ENCODE measurements at regions of chr14 and their contacts with region 1.

Region 1: DNA sequence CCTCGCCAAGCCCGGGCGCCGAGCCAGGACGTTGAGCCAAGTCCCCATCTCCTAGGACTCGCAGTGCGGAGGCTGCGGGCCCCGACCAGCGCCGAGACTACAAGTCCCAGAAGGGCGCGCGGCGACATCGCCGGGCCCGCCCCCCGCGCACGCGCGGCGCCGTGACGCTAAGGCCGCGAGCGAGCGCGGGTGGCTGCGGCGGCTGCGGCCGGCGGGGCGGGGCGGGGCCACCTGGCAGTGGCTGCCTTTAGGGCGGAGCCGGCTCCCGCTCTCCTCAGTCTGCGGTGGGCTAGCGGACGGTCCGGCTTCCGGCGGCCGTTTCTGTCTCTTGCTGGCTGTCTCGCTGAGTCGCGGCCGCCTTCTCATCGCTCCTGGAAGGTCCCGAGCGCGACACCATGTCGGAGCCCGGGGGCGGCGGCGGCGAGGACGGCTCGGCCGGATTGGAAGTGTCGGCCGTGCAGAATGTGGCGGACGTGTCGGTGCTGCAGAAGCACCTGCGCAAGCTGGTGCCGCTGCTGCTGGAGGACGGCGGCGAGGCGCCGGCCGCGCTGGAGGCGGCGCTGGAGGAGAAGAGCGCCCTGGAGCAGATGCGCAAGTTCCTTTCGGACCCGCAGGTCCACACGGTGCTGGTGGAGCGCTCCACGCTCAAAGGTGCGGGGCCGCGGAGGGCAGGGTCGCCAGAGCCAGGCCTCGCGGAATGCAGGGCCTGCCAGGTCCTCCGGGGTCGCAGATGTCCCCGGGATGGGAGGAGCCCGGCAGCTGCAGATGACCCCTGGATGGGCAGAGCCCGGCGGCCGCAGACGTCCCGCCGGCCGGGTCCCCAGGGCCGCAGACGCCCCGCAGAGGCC is at the start of gene DYNC1H1:
- DNase-seq: peak; percentile 94
- ATAC-seq: peak; percentile 90
- H3K4me3 ChIP-seq: peak within 1 kb of the TSS; percentile 46 to 97 (median 93)
- H3K4me3 Mint-ChIP-seq: peak within 1 kb of the TSS; percentile 96
- H3K27ac ChIP-seq: peak within 1 kb of the TSS; percentile 72 to 82
- H3K27ac Mint-ChIP-seq: peak within 1 kb of the TSS; percentile 94
- H3K4me1 ChIP-seq: peaks cover 12 to 22% of the 10 kb centered on the region in 2 donors
- H3K4me1 Mint-ChIP-seq: peaks cover 42% of the 10 kb centered on the region
- H3K27me3 ChIP-seq: no peaks in the 10 kb centered on the region
- H3K27me3 Mint-ChIP-seq: no peaks in the 10 kb centered on the region
- CTCF ChIP-seq: no peak
- total RNA-seq, gene DYNC1H1: 257 TPM in 2 replicates

Region 2: DNA sequence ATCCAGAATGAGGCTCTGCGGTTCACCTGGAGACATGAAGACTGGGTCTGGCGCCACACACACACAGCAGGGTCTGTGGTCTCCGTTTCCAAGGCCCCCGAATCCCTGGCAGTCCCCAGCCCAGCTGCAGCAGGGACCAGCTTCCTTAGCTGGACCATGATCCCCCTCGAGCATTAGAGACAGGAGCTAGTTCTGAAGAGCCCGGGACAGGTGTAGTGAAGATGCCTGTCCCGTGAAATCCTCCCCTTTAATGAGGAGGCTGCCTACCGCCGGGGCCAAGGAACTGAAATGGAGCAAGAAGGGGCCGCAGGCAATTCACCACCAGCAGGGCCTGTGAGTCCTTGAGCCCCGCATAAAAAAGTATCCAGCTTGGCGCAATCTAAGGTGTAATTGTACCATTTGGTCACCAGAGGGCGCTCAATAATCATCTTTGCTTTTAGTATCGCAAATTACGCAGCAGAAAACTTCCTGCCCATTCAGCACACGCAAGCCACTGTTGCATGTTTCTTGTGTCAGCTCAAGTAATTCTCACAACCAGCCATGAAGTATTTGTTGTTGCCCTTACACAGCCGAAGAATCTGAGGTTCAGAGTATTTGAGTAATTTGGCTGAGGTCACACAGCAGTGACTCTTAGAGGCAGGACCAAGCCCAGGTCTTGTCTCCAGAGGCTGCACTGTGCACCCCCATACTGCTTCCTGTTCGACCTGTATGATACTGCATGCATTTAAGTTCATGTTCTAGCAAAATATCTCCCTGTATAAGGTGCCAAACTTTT is 257.3 kb before region 1 on chr14:
- CTCF ChIA-PET with region 1: interaction called, 10 read pairs
- POLR2A ChIA-PET with region 1: interaction called, 3 read pairs
- intact Hi-C with region 1: loop called (anchors 1 kb)
- DNase-seq: peak; percentile 89
- ATAC-seq: peak; percentile 71
- H3K4me3 ChIP-seq: peak overlapping the region in 1 of 5 experiments; percentile 5
- H3K4me3 Mint-ChIP-seq: peak overlapping the region; percentile 65
- H3K27ac ChIP-seq: no peak overlapping the region
- H3K27ac Mint-ChIP-seq: peak overlapping the region; percentile 53
- H3K4me1 ChIP-seq: peaks cover 19 to 23% of the 10 kb centered on the region in 2 donors
- H3K4me1 Mint-ChIP-seq: peaks cover 22% of the 10 kb centered on the region
- H3K27me3 ChIP-seq: peaks cover 0 to 7% (median 1%) of the 10 kb centered on the region in 4 experiments
- H3K27me3 Mint-ChIP-seq: peaks cover 18% of the 10 kb centered on the region
- CTCF ChIP-seq: peak; percentile 90

Region 3: GRCh38 chr14:101843665-101844064 is 120.9 kb before region 1 on chr14:
- CTCF ChIA-PET with region 1: interaction called, 5 read pairs
- POLR2A ChIA-PET with region 1: no interaction called
- intact Hi-C with region 1: loop called (anchors 5 kb)
- DNase-seq: peak; percentile 94
- ATAC-seq: peak; percentile 87
- H3K4me3 ChIP-seq: peak overlapping the region in 1 of 5 experiments; percentile 4
- H3K4me3 Mint-ChIP-seq: peak overlapping the region; percentile 67
- H3K27ac ChIP-seq: peak overlapping the region; percentile 37 to 75
- H3K27ac Mint-ChIP-seq: peak overlapping the region; percentile 81
- H3K4me1 ChIP-seq: peaks cover 49 to 51% of the 10 kb centered on the region in 2 donors
- H3K4me1 Mint-ChIP-seq: peaks cover 79% of the 10 kb centered on the region
- H3K27me3 ChIP-seq: no peaks in the 10 kb centered on the region
- H3K27me3 Mint-ChIP-seq: no peaks in the 10 kb centered on the region
- CTCF ChIP-seq: peak; percentile 87

Region 4: GRCh38 chr14:101980251-101981099 is 16.0 kb after region 1 on chr14:
- CTCF ChIA-PET with region 1: no interaction called
- POLR2A ChIA-PET with region 1: interaction called, 4 read pairs
- intact Hi-C with region 1: loop called (anchors 2 kb)
- DNase-seq: peak; percentile 21
- ATAC-seq: peak; percentile 65
- H3K4me3 ChIP-seq: no peak overlapping the region
- H3K4me3 Mint-ChIP-seq: no peak overlapping the region
- H3K27ac ChIP-seq: peak overlapping the region; percentile 3
- H3K27ac Mint-ChIP-seq: peak overlapping the region; percentile 57
- H3K4me1 ChIP-seq: peaks cover 4 to 5% of the 10 kb centered on the region in 2 donors
- H3K4me1 Mint-ChIP-seq: peaks cover 12% of the 10 kb centered on the region
- H3K27me3 ChIP-seq: no peaks in the 10 kb centered on the region
- H3K27me3 Mint-ChIP-seq: no peaks in the 10 kb centered on the region
- CTCF ChIP-seq: no peak

Region 5: GRCh38 chr14:102096214-102097114 is 131.9 kb after region 1 on chr14:
- CTCF ChIA-PET with region 1: interaction called, 21 read pairs
- POLR2A ChIA-PET with region 1: no interaction called
- intact Hi-C with region 1: loop called (anchors 1 kb)
- DNase-seq: peak; percentile 69
- ATAC-seq: peak; percentile 73
- H3K4me3 ChIP-seq: no peak overlapping the region
- H3K4me3 Mint-ChIP-seq: no peak overlapping the region
- H3K27ac ChIP-seq: no peak overlapping the region
- H3K27ac Mint-ChIP-seq: no peak overlapping the region
- H3K4me1 ChIP-seq: peaks cover 0 to 3% of the 10 kb centered on the region in 2 donors
- H3K4me1 Mint-ChIP-seq: peaks cover 4% of the 10 kb centered on the region
- H3K27me3 ChIP-seq: no peaks in the 10 kb centered on the region
- H3K27me3 Mint-ChIP-seq: no peaks in the 10 kb centered on the region
- CTCF ChIP-seq: peak; percentile 78

Region 6: DNA sequence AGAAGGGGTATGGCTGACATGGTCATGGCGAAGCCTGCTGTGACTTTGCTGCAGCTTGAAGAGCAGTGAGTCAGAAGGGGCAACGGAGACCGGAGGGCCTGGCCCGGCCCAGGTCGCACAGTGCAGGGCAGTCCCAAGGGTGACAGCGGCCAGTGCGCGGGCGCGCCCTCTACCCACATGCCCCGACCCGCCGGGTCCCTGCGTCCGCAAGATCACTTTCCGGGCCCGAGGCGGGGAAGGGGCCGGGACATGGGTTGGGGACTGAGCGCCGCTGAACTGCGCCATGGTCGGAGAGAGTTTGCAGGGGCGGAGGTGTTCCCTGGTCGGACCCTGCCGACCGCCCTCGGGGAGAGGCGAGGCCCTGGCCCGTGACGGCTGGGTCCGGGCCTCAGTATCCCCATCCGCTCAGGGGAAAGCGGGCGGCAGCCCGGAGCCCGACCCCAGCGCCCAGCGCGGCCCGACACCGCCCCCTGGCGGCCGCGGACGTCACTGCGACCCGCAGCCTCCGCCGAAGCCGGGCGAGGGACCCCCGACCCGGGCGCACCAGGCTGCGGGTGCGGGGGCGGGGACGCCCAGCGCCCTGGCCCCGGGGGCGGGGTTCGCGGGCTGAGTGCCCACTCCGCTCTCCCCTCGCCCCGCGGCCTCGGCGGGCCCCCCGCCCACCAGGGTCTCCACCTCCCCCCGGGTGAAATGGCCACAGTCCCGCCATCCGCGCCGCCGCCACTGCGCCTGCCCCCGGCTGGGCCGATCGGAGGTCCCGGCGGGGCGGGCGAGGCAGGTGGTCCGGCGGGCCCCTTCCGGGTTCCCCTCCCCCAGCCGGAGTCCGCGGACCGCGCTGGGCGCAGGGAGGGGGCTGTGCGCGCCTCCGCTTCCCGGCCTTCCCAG is 552.3 kb after region 1 on chr14:
- CTCF ChIA-PET with region 1: no interaction called
- POLR2A ChIA-PET with region 1: no interaction called
- intact Hi-C with region 1: loop called (anchors 5 kb)
- DNase-seq: peak; percentile 74
- ATAC-seq: peak; percentile 89
- H3K4me3 ChIP-seq: peak overlapping the region in 4 of 5 experiments; percentile 33 to 64 (median 54)
- H3K4me3 Mint-ChIP-seq: peak overlapping the region; percentile 88
- H3K27ac ChIP-seq: no peak overlapping the region
- H3K27ac Mint-ChIP-seq: peak overlapping the region; percentile 68
- H3K4me1 ChIP-seq: peaks cover 10 to 12% of the 10 kb centered on the region in 2 donors
- H3K4me1 Mint-ChIP-seq: peaks cover 7% of the 10 kb centered on the region
- H3K27me3 ChIP-seq: peaks cover 0 to 30% (median 3%) of the 10 kb centered on the region in 4 experiments
- H3K27me3 Mint-ChIP-seq: peaks cover 15% of the 10 kb centered on the region
- CTCF ChIP-seq: peak; percentile 96

Measured in B cell (primary cell).